GM12878 (cell line): ENCODE measurements at regions of chr19 and their contacts with region 1.

Region 1: GRCh38 chr19:34712395-34713261 is 21.4 kb upstream of the ZNF181 start:
- DNase-seq: peak; percentile 23
- ATAC-seq: peak; percentile 78
- H3K4me3 ChIP-seq: no peak overlapping the region
- H3K27ac ChIP-seq: no peak overlapping the region
- H3K4me1 ChIP-seq: no peaks in the 10 kb centered on the region
- H3K27me3 ChIP-seq: no peaks in the 10 kb centered on the region
- CTCF ChIP-seq: peak; percentile 45 to 74 (median 53); a peak in 5 of 6 replicates
- EP300 ChIP-seq: no peak
- POLR2A ChIP-seq: no peak
- RAD21 ChIP-seq: peak; percentile 81

Region 2: DNA sequence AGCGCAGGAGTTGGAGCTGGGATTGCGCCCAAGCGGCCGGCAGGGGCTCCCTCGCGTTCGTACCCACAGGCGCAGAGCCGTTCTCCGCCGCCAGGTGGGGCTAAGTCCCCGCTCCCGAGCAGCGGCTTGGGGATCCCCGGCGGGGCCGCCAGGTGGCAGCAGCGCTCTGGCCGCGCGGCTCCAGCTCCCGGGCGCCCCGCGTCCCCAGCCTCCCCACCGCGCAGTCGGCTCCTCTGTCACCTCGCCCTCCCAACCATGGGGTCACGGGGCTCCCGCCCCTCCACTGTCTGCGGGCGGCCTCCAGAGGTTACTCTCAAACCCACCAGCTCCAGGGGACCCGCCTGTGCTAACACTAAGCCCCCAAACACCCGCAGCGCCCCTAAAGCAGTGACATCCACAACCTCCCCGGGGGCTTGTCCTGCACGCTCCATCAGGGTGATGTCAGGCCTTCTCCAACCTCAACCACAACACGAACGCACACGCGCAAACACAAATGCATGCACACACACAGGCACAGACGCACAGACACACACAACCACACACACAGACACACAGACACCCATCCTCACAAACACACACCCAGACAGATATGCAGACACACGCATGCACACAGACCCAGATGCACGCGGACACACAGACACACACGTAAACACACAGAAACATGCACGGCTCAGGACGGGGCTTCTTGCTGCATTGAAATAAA is 934.4 kb before region 1 on chr19:
- CTCF ChIA-PET with region 1: interaction called, 6 read pairs
- POLR2A ChIA-PET with region 1: no interaction called
- RAD21 ChIA-PET with region 1: no interaction called
- SMC1A ChIA-PET with region 1: no interaction called
- in situ Hi-C with region 1: loop called (anchors 25 kb)
- intact Hi-C with region 1: loop called (anchors 10 kb)
- DNase-seq: peak; percentile 4
- ATAC-seq: peak; percentile 99
- H3K4me3 ChIP-seq: no peak overlapping the region
- H3K27ac ChIP-seq: no peak overlapping the region
- H3K4me1 ChIP-seq: no peaks in the 10 kb centered on the region
- H3K27me3 ChIP-seq: peaks cover 0 to 3% of the 10 kb centered on the region in 2 experiments; a peak in 2 of 4 replicates
- CTCF ChIP-seq: peak; percentile 100; a peak in 5 of 6 replicates
- EP300 ChIP-seq: no peak
- POLR2A ChIP-seq: no peak
- RAD21 ChIP-seq: peak; percentile 84

Region 3: DNA sequence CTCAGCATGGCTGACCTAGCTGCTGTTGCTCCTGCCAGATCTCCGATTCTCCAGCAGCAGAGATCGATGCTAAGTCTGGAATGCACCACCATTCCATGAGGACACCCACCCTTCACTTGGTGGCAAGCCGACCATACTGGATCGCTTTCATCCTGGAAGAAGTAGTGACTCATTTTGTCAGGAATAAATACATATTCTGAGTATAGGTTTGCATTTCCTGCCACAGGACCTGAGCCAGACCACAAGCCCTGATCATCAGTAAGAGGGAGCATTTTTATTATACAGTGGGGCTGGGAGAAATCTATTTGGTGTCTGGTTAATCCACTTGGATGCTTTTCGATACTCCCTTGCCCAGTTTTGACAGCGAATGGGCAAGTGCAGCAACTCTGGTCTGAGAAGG is 926.8 kb before region 1 on chr19:
- CTCF ChIA-PET with region 1: no interaction called
- POLR2A ChIA-PET with region 1: no interaction called
- RAD21 ChIA-PET with region 1: no interaction called
- SMC1A ChIA-PET with region 1: no interaction called
- in situ Hi-C with region 1: loop called (anchors 25 kb)
- intact Hi-C with region 1: loop called (anchors 10 kb)
- DNase-seq: no peak
- ATAC-seq: no peak
- H3K4me3 ChIP-seq: no peak overlapping the region
- H3K27ac ChIP-seq: no peak overlapping the region
- H3K4me1 ChIP-seq: no peaks in the 10 kb centered on the region
- H3K27me3 ChIP-seq: no peaks in the 10 kb centered on the region
- CTCF ChIP-seq: no peak
- EP300 ChIP-seq: no peak
- POLR2A ChIP-seq: no peak
- RAD21 ChIP-seq: no peak

Region 4: GRCh38 chr19:34310471-34310981 is 402.1 kb before region 1 on chr19:
- CTCF ChIA-PET with region 1: no interaction called
- POLR2A ChIA-PET with region 1: no interaction called
- RAD21 ChIA-PET with region 1: no interaction called
- SMC1A ChIA-PET with region 1: no interaction called
- in situ Hi-C with region 1: no loop called
- intact Hi-C with region 1: no loop called
- DNase-seq: no peak
- ATAC-seq: no peak; the same call in 2 of the 3 replicates
- H3K4me3 ChIP-seq: no peak overlapping the region
- H3K27ac ChIP-seq: no peak overlapping the region
- H3K4me1 ChIP-seq: peaks cover 21% of the 10 kb centered on the region
- H3K27me3 ChIP-seq: no peaks in the 10 kb centered on the region
- CTCF ChIP-seq: no peak
- EP300 ChIP-seq: no peak
- POLR2A ChIP-seq: no peak
- RAD21 ChIP-seq: no peak

Region 5: GRCh38 chr19:34501339-34502320 is 211.0 kb before region 1 on chr19:
- CTCF ChIA-PET with region 1: interaction called, 3 read pairs
- POLR2A ChIA-PET with region 1: no interaction called
- RAD21 ChIA-PET with region 1: no interaction called
- SMC1A ChIA-PET with region 1: no interaction called
- in situ Hi-C with region 1: no loop called
- intact Hi-C with region 1: loop called (anchors 1 kb)
- DNase-seq: peak; percentile 25
- ATAC-seq: peak; percentile 96
- H3K4me3 ChIP-seq: no peak overlapping the region
- H3K27ac ChIP-seq: no peak overlapping the region
- H3K4me1 ChIP-seq: no peaks in the 10 kb centered on the region
- H3K27me3 ChIP-seq: no peaks in the 10 kb centered on the region
- CTCF ChIP-seq: peak; percentile 99 to 100 (median 99); a peak in 5 of 6 replicates
- EP300 ChIP-seq: no peak
- POLR2A ChIP-seq: no peak
- RAD21 ChIP-seq: peak; percentile 79

Region 6: DNA sequence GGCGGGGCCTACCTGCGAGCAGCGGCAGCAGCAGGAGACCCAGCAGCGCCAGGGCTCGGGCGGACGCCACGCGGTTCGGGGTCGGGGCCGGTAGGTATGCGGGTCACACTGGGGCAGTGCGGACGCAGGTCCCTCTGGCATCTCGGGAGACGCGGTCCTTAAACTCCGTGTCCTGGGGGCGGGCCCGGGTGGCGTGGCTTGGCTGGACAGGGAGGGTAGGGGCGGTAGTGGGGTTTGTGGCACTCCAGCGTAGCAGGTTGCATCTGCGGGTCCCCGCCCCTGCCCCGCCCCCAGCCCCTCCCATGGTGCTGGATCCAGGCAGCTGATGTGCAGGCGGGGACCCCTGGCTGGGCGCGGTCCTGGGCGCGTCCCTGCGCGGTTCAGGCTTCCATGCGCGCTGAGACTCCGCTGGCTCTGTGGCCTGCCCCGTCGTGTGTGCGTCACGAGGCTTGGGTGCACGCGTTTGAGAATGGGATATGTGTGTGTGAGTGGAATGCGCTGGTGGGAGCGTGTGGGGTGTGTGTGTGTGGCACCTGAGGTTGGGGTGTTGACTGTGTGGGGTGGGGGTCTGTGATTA is 135.0 kb before region 1 on chr19:
- CTCF ChIA-PET with region 1: no interaction called
- POLR2A ChIA-PET with region 1: no interaction called
- RAD21 ChIA-PET with region 1: no interaction called
- SMC1A ChIA-PET with region 1: no interaction called
- in situ Hi-C with region 1: no loop called
- intact Hi-C with region 1: no loop called
- DNase-seq: no peak
- ATAC-seq: no peak
- H3K4me3 ChIP-seq: no peak overlapping the region
- H3K27ac ChIP-seq: no peak overlapping the region
- H3K4me1 ChIP-seq: no peaks in the 10 kb centered on the region
- H3K27me3 ChIP-seq: no peaks in the 10 kb centered on the region
- CTCF ChIP-seq: no peak
- EP300 ChIP-seq: no peak
- POLR2A ChIP-seq: no peak
- RAD21 ChIP-seq: no peak

Region 7: DNA sequence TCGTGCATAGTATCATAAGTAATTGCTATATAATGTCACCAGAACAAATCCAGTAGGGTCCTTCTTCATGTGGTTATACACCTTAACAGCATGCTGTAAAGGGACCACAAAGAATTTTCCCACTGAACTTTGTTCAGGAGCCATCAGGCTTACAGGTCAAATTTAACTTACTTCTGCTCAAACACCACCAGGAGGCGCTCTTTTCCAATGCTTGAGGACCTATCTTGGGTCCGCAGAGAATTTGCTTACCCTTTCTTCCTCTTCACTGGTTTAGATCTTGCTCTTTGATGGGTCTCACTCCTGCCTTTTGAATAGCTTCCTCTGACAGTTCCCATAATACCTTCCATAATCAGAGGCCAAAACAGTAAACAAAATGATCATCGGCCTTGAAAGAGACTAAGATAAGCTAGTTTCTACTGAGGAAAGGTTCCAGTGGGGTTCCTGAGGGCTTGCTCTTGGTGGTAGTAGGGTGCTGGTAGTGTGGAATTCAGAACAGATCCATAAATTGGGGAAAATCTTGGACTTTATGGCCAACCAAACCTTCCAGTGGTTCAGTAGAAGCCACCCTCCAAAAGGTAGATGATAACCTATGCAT is 73.0 kb before region 1 on chr19:
- CTCF ChIA-PET with region 1: interaction called, 45 read pairs
- POLR2A ChIA-PET with region 1: no interaction called
- RAD21 ChIA-PET with region 1: interaction called, 8 read pairs
- SMC1A ChIA-PET with region 1: interaction called, 4 read pairs
- in situ Hi-C with region 1: loop called (anchors 5 kb)
- intact Hi-C with region 1: loop called (anchors 1 kb)
- DNase-seq: peak; percentile 13
- ATAC-seq: peak; percentile 72
- H3K4me3 ChIP-seq: no peak overlapping the region
- H3K27ac ChIP-seq: no peak overlapping the region
- H3K4me1 ChIP-seq: no peaks in the 10 kb centered on the region
- H3K27me3 ChIP-seq: no peaks in the 10 kb centered on the region
- CTCF ChIP-seq: peak; percentile 75 to 76 (median 76)
- EP300 ChIP-seq: no peak
- POLR2A ChIP-seq: no peak
- RAD21 ChIP-seq: peak; percentile 80